Endothelial cell of umbilical vein (primary cell): ENCODE measurements at regions of chr1 and their contacts with region 1.

Region 1: GRCh38 chr1:225480825-225481434 is 53.1 kb upstream of the LBR start:
- DNase-seq: peak; percentile 54
- H3K4me3 ChIP-seq: no peak overlapping the region
- H3K27ac ChIP-seq: no peak overlapping the region
- H3K4me1 ChIP-seq: no peaks in the 10 kb centered on the region
- H3K27me3 ChIP-seq: no peaks in the 10 kb centered on the region
- CTCF ChIP-seq: peak; percentile 86
- POLR2A ChIP-seq: no peak

Region 2: GRCh38 chr1:225467193-225468020 is 13.5 kb before region 1 on chr1:
- CTCF ChIA-PET with region 1: interaction called, 10 read pairs
- POLR2A ChIA-PET with region 1: no interaction called
- dilution Hi-C with region 1: no loop called
- intact Hi-C with region 1: no loop called
- DNase-seq: peak; percentile 69
- H3K4me3 ChIP-seq: peak overlapping the region in 2 of 3 experiments; percentile 0 to 2
- H3K27ac ChIP-seq: peak overlapping the region; percentile 62
- H3K4me1 ChIP-seq: peaks cover 19% of the 10 kb centered on the region
- H3K27me3 ChIP-seq: no peaks in the 10 kb centered on the region
- CTCF ChIP-seq: no peak
- POLR2A ChIP-seq: peak; percentile 78

Region 3: DNA sequence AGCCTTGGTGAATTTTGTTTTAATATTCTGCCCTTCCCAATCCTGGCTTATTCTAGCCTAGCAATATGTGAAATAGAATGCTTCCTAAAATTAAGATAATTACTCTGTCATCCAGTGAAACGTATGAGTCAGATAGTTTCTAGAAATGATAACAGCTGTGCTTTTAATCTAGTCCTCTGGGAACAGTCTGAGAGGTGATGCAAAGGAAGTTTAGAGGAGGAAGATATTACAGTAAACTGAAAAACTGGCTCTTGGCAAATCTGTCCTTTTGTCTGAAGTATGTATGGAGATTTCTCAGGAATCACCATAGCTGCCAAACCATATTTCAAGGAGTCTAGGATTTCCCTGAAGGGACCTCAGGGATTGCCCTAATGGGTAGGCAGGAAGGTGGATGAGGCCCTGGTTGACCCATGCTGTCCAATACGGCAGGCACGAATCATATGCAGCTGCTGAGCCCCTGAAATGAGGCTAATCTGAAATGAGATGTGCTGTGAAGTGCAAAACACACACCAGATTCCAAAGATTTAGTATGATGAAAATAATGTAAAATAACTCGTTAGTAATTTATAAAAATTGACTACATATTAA is 17.7 kb after region 1 on chr1:
- CTCF ChIA-PET with region 1: interaction called, 12 read pairs
- POLR2A ChIA-PET with region 1: interaction called, 8 read pairs
- dilution Hi-C with region 1: no loop called
- intact Hi-C with region 1: no loop called
- DNase-seq: no peak
- H3K4me3 ChIP-seq: no peak overlapping the region
- H3K27ac ChIP-seq: no peak overlapping the region
- H3K4me1 ChIP-seq: peaks cover 2% of the 10 kb centered on the region
- H3K27me3 ChIP-seq: no peaks in the 10 kb centered on the region
- CTCF ChIP-seq: no peak
- POLR2A ChIP-seq: no peak

Region 4: GRCh38 chr1:225508538-225509375 is 27.8 kb after region 1 on chr1:
- CTCF ChIA-PET with region 1: interaction called, 15 read pairs
- POLR2A ChIA-PET with region 1: no interaction called
- dilution Hi-C with region 1: no loop called
- intact Hi-C with region 1: no loop called
- DNase-seq: peak; percentile 97
- H3K4me3 ChIP-seq: no peak overlapping the region
- H3K27ac ChIP-seq: peak overlapping the region; percentile 72
- H3K4me1 ChIP-seq: peaks cover 23% of the 10 kb centered on the region
- H3K27me3 ChIP-seq: no peaks in the 10 kb centered on the region
- CTCF ChIP-seq: no peak
- POLR2A ChIP-seq: no peak